Calu3 (cell line): ENCODE measurements at regions of chr12 and their contacts with region 1.

Region 1: GRCh38 chr12:84619113-84619512 is 293.5 kb downstream of the SLC6A15 start:
- DNase-seq: no peak
- H3K4me3 Mint-ChIP-seq: no peak overlapping the region
- H3K27ac Mint-ChIP-seq: no peak overlapping the region
- H3K4me1 Mint-ChIP-seq: no peaks in the 10 kb centered on the region
- H3K27me3 Mint-ChIP-seq: no peaks in the 10 kb centered on the region
- CTCF ChIP-seq: no peak

Region 2: GRCh38 chr12:84507956-84508850 is 110.9 kb before region 1 on chr12:
- CTCF ChIA-PET with region 1: no interaction called
- intact Hi-C with region 1: loop called (anchors 2 kb)
- DNase-seq: peak; percentile 24
- H3K4me3 Mint-ChIP-seq: no peak overlapping the region
- H3K27ac Mint-ChIP-seq: no peak overlapping the region
- H3K4me1 Mint-ChIP-seq: peaks cover 19% of the 10 kb centered on the region
- H3K27me3 Mint-ChIP-seq: no peaks in the 10 kb centered on the region
- CTCF ChIP-seq: no peak

Region 3: GRCh38 chr12:84727964-84728363 is 108.9 kb after region 1 on chr12:
- CTCF ChIA-PET with region 1: no interaction called
- intact Hi-C with region 1: no loop called
- DNase-seq: peak; percentile 6
- H3K4me3 Mint-ChIP-seq: no peak overlapping the region
- H3K27ac Mint-ChIP-seq: no peak overlapping the region
- H3K4me1 Mint-ChIP-seq: peaks cover 10% of the 10 kb centered on the region
- H3K27me3 Mint-ChIP-seq: no peaks in the 10 kb centered on the region
- CTCF ChIP-seq: no peak